Colonic mucosa (tissue), 4 donors: ENCODE measurements at regions of chr18 and their contacts with region 1.

Region 1: DNA sequence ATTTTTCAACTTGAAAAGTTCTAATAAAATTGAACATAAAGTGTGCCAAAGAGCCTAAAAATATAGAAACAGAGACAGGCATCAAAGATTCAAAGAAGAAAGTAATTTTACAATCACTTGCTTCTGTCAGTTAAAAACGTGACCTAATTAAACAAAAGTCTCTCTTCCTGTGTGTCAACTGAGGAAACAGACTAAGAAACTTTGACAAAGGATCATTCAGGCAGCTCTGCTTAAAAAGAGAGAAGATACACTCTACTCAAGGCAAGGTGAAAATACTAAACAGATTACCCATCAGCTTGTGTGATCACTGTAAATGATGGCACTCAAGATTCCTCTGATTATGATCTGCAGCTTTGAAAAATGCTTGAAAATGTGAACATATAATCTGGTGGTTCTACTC is 47.8 kb downstream of the DYM start:
- DNase-seq: no peak
- H3K4me3 ChIP-seq: no peak overlapping the region
- H3K27ac ChIP-seq: no peak overlapping the region
- H3K4me1 ChIP-seq: no peaks in the 10 kb centered on the region
- H3K27me3 ChIP-seq: no peaks in the 10 kb centered on the region
- CTCF ChIP-seq: no peak

Region 2: GRCh38 chr18:49178736-49179135 is 233.9 kb before region 1 on chr18:
- intact Hi-C with region 1: loop called (anchors 10 kb)
- DNase-seq: peak; percentile 29
- H3K4me3 ChIP-seq: no peak overlapping the region
- H3K27ac ChIP-seq: no peak overlapping the region
- H3K4me1 ChIP-seq: no peaks in the 10 kb centered on the region
- H3K27me3 ChIP-seq: no peaks in the 10 kb centered on the region
- CTCF ChIP-seq: peak; percentile 24

Region 3: DNA sequence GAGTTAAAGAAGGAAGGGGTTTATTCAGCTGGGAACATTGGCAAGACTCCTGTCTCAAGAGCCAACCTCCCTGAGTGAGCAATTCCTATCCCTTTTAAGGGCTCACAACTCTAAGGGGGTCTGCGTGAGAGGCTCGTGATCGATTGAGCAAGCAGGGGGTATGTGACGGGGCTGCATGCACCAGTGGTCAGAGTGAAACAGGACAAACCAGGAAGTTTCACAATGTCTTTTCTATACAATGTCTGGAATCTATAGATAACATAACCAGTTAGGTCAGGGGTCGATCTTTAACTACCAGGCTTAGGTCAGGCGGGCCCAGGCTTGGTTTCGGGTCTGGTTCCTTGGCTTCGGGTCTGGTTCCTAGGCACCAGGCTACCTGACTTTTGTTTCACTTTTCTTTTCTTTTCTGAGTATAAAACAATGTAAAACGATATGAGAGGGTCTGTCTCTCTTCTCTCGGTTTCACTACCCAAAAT is 119.0 kb after region 1 on chr18:
- intact Hi-C with region 1: no loop called
- DNase-seq: no peak
- H3K4me3 ChIP-seq: no peak overlapping the region
- H3K27ac ChIP-seq: no peak overlapping the region
- H3K4me1 ChIP-seq: no peaks in the 10 kb centered on the region
- H3K27me3 ChIP-seq: no peaks in the 10 kb centered on the region
- CTCF ChIP-seq: no peak